Calu3 (cell line): ENCODE measurements at regions of chr13 and their contacts with region 1.

Region 1: DNA sequence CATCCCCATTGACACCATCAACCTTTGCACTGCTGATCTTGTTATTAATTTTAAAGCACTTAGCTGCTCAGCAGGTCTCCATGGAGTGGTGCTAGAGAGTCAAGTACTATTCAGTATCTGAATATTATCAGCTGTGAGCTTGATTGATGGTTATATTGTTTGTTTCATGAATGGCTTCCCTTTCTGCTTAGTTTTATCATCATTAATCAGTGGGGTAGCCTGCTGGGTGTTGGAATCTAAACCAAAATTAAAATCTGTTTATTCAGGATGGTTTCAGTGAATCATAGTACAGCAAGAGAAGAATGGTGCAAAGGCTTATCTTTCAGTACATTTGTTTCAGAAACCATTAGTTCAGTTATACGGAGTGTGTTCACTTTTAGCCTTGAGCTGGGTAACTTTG is 42.5 kb upstream of the SCEL start:
- DNase-seq: peak; percentile 7
- H3K4me3 Mint-ChIP-seq: no peak overlapping the region
- H3K27ac Mint-ChIP-seq: no peak overlapping the region
- H3K4me1 Mint-ChIP-seq: no peaks in the 10 kb centered on the region
- H3K27me3 Mint-ChIP-seq: no peaks in the 10 kb centered on the region
- CTCF ChIP-seq: no peak

Region 2: DNA sequence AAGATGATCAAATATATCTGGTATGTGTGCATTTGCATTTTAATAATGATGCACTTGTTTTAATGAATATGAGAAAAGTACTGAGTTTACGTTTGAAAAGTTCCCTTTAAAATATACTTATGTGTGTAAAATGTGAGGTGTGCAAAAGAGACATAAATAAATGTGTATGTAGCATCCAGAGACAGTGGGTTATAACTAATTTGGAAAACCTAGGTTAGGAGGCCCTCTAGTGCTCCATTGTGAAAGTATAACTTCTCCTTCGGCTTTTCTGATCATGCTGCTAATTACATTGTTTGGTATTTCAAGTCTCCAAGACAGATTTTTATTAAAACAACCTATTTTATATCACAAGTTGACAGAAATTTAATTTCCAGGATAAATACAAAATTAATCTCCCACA is 72.7 kb after region 1 on chr13:
- CTCF ChIA-PET with region 1: interaction called, 6 read pairs
- intact Hi-C with region 1: loop called (anchors 1 kb)
- DNase-seq: no peak
- H3K4me3 Mint-ChIP-seq: no peak overlapping the region
- H3K27ac Mint-ChIP-seq: no peak overlapping the region
- H3K4me1 Mint-ChIP-seq: no peaks in the 10 kb centered on the region
- H3K27me3 Mint-ChIP-seq: no peaks in the 10 kb centered on the region
- CTCF ChIP-seq: no peak

Region 3: DNA sequence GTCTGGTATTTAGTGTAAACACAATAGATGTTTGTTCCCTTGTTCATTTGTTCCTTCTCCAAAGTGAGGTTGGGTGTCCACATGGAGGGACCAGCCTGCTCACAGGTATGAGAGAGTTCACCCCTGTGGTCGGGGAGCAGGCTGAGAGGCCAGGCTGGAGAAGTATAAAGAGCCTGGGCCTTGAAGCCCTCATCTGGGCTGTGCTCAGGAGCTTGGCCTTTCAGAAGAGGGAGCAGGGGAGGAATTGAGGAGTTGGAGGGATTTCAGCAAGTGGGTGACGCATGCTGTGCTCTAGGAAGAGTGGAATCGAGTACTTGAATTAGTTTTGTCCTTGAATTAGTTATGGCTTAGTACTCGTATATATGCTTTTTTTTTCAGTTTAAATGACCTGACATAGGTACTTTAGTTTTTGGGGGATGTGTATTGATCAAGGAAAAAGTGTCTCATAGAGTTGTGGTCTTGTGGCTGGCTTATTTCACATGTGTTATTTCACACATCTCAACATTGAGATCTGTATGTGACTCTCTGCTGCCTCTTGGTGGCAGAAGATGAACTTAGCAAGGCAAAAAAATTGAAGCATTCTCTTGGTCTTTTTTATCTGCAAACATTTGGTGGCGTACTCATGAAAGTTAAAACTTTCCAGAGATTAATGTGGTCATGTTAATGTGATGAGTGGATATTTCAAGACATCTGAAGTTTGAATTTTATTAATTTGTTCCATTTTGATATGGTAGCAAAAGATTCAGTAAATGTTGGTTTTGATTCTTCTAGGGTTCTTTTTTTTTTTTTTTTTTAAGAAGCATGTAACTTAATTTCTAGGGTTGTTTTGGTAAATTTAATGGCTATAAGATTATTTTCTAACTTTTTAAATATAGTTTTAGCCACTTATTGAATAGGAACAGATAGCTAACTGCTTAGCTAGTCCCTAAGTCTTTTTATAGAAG is 258.8 kb after region 1 on chr13:
- CTCF ChIA-PET with region 1: no interaction called
- intact Hi-C with region 1: loop called (anchors 1 kb)
- DNase-seq: peak; percentile 7
- H3K4me3 Mint-ChIP-seq: no peak overlapping the region
- H3K27ac Mint-ChIP-seq: no peak overlapping the region
- H3K4me1 Mint-ChIP-seq: no peaks in the 10 kb centered on the region
- H3K27me3 Mint-ChIP-seq: no peaks in the 10 kb centered on the region
- CTCF ChIP-seq: no peak